Breast epithelium (tissue), 4 donors: ENCODE measurements at regions of chr9 and their contacts with region 1.

Region 1: DNA sequence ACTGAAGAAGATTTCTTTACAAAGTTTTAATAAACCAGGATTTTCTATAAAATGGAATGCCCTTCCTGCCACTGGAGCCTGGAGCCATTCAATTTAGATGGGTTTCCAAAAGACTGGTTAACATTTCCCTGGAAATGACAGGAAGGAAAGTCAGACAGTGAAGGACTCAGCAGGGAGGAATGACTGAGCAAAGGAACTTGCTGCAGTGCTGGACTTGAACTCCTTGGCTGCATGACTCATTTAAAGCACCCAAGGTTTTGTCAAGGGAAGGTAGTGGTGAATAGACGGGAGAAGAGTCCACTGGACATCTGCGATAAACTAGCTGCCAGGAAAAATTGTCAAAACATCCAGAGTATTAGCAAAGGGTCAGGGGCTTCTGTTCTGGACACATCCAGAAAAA is 163.8 kb upstream of the SLC28A3 start:
- DNase-seq: no peak
- H3K4me3 ChIP-seq: no peak overlapping the region
- H3K27ac ChIP-seq: no peak overlapping the region
- H3K4me1 ChIP-seq: no peaks in the 10 kb centered on the region
- H3K27me3 ChIP-seq: no peaks in the 10 kb centered on the region
- CTCF ChIP-seq: no peak
- POLR2A ChIP-seq: no peak

Region 2: DNA sequence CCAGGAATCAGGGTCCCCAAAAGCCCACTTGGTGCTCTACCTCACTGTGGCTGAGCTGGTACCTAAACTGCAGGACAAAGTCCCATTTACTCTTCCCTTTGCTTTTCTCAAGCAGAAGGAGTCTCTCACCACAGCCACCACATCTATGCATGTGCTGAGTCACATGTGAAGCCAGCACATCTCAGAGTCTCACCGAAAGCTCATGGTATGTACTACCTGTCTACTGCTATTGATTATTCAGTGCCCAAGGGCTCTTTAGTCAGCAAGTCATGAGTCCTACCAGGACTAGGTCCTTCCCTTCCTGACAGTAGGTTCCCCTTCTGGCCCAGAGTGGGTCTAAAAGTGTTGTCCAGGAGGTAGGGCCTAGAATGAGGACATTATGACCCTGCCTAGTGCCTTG is 34.5 kb after region 1 on chr9:
- intact Hi-C with region 1: loop called (anchors 1 kb)
- DNase-seq: no peak
- H3K4me3 ChIP-seq: no peak overlapping the region
- H3K27ac ChIP-seq: no peak overlapping the region
- H3K4me1 ChIP-seq: no peaks in the 10 kb centered on the region
- H3K27me3 ChIP-seq: no peaks in the 10 kb centered on the region
- CTCF ChIP-seq: no peak
- POLR2A ChIP-seq: no peak